Aorta (tissue), 5 donors: ENCODE measurements at regions of chr11 and their contacts with region 1.

Region 1: DNA sequence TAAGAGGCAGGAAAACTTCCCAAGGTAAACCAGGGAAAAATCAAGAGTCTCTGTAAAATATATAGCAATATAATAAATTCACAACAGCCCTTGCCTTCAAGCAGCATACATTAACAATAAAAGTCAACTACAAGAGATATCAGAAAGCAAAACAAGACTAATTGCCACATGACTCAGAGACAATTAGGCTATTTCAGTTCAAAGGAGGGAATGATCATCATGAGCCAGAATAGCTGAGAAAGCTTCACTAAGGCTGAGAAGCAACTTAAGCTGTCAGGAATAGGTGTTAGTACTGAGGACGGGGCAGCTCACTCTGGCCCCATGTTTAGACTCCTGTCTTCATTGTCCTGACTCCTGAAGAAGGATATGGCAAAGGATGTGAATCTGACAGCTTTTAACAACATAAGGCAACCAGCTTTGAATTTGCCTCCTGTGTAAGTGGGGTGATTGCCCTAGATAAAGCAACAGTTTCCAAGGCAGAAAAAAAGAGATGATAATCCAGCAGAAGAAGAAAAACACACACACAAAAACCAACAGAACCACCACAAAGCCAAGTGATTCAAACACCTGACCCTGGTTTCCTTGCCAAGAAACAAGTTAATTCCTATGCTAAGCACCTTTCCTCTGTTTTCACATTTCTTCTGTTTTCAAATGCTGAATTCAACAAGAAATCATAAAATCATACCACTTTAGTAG is 60.8 kb downstream of the SIK3 start:
- DNase-seq: no peak
- ATAC-seq: no peak
- H3K4me3 ChIP-seq: no peak overlapping the region
- H3K27ac ChIP-seq: no peak overlapping the region
- H3K4me1 ChIP-seq: peaks cover 3% of the 10 kb centered on the region in 2 donors
- H3K27me3 ChIP-seq: no peaks in the 10 kb centered on the region

Region 2: DNA sequence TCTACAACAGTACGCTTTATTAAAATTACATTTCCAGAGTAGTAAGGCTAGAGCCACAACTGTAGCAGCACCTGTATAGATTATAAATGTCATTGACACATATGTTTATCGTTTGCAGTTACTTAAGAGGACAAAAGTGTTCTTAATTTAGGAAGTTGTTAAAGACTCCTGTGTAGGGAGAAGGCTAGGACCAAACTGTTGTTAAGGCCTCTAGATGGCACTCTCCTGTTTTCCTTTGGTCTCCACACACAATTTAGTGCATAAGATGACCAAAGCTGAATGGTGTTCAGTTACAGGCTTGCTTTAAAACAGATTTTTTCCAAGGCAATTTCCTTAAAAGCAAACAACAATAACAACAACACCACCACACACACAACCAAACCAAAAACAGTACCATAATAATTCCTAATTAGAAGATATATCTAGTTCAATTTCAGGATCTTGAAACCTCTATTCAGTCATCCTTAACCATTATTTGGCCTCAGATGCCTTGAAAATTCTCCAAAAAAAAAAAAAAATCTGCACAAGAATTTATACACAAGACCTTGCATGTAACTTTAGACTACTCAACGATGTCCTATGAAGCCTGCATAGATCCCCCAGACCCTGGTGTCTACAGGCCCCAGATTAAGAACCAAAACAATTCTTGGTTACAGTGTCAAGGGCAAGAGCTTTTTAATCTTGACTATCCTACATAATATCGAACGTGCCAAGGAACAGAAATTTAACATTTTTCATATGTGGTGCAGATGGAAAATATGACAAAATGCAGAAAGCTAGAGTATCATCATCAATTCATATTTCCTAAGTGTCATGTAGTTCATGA is 157.4 kb before region 1 on chr11:
- intact Hi-C with region 1: no loop called
- DNase-seq: no peak
- ATAC-seq: peak; percentile 76
- H3K4me3 ChIP-seq: no peak overlapping the region
- H3K27ac ChIP-seq: no peak overlapping the region
- H3K4me1 ChIP-seq: no peaks in the 10 kb centered on the region
- H3K27me3 ChIP-seq: no peaks in the 10 kb centered on the region

Region 3: DNA sequence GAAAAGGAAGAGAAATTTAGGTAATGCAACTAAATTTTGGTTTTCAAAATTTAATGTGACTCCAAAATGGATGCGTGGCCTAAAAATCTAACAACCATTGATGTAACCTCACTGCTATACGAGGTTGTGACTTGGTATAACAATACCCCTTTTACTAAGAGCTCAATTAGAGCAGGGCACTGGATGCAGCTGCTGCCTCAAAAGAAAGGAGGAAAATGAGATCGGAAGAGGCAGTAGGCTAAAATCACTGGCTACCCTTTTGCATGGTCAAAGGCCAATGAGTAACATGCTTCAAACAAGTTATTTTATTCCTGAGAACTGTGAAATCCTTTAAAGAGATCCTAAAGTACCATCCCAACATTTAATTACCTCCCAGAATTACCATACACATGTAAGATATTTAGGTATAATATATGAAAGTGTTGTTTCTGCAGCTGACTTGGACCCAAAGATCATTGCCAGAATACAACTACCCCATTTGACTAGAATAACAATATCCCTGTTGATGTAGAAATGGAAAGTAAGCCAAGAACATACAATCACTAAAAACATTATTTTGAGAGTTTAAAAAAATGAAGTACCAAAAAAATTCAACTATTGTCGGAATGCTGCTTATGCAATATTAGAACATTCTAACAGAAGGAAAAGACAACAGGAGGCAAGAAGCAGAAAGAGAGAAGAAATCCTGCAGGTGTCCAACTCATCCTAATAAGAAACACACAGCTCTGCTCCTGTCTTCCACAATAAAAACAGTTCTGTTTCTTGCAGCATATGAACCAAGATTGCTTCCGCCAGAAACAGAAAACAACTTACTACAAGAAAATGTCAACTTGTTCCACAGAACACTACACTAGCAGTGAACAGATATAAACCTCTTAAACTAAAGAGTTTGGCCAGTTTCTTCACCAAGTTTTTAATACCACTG is 45.8 kb after region 1 on chr11:
- intact Hi-C with region 1: loop called in 1 of 2 experiments (anchors 10 kb)
- DNase-seq: no peak
- ATAC-seq: no peak
- H3K4me3 ChIP-seq: no peak overlapping the region
- H3K27ac ChIP-seq: peak overlapping the region; percentile 58 to 76
- H3K4me1 ChIP-seq: peaks cover 0 to 5% of the 10 kb centered on the region in 2 donors
- H3K27me3 ChIP-seq: no peaks in the 10 kb centered on the region